ENCODE measurements at regions of chr12 and their contacts with region 1.

Region 1: GRCh38 chr12:22334410-22335290 is at the start of gene ST8SIA1:
- DNase-seq: peak; percentile 62
- H3K4me3 Mint-ChIP-seq: peak within 1 kb of the TSS; percentile 91
- H3K27ac Mint-ChIP-seq: peak within 1 kb of the TSS; percentile 81
- H3K4me1 Mint-ChIP-seq: peaks cover 32% of the 10 kb centered on the region
- H3K27me3 Mint-ChIP-seq: peaks cover 24% of the 10 kb centered on the region
- total RNA-seq, gene ST8SIA1: 2.6 to 3.1 TPM

Region 2: GRCh38 chr12:22100958-22101748 is 233.5 kb before region 1 on chr12:
- CTCF ChIA-PET with region 1: interaction called, 13 read pairs
- POLR2A ChIA-PET with region 1: interaction called, 17 read pairs
- DNase-seq: peak; percentile 44
- H3K4me3 Mint-ChIP-seq: no peak overlapping the region
- H3K27ac Mint-ChIP-seq: no peak overlapping the region
- H3K4me1 Mint-ChIP-seq: peaks cover 12% of the 10 kb centered on the region
- H3K27me3 Mint-ChIP-seq: peaks cover 4% of the 10 kb centered on the region

Region 3: GRCh38 chr12:22215467-22216253 is 119.0 kb before region 1 on chr12:
- CTCF ChIA-PET with region 1: no interaction called
- POLR2A ChIA-PET with region 1: no interaction called
- DNase-seq: no peak
- H3K4me3 Mint-ChIP-seq: no peak overlapping the region
- H3K27ac Mint-ChIP-seq: no peak overlapping the region
- H3K4me1 Mint-ChIP-seq: no peaks in the 10 kb centered on the region
- H3K27me3 Mint-ChIP-seq: no peaks in the 10 kb centered on the region

Region 4: GRCh38 chr12:22282261-22282660 is 52.4 kb before region 1 on chr12:
- CTCF ChIA-PET with region 1: no interaction called
- POLR2A ChIA-PET with region 1: no interaction called
- DNase-seq: no peak
- H3K4me3 Mint-ChIP-seq: no peak overlapping the region
- H3K27ac Mint-ChIP-seq: no peak overlapping the region
- H3K4me1 Mint-ChIP-seq: peaks cover 7% of the 10 kb centered on the region
- H3K27me3 Mint-ChIP-seq: no peaks in the 10 kb centered on the region

Region 5: DNA sequence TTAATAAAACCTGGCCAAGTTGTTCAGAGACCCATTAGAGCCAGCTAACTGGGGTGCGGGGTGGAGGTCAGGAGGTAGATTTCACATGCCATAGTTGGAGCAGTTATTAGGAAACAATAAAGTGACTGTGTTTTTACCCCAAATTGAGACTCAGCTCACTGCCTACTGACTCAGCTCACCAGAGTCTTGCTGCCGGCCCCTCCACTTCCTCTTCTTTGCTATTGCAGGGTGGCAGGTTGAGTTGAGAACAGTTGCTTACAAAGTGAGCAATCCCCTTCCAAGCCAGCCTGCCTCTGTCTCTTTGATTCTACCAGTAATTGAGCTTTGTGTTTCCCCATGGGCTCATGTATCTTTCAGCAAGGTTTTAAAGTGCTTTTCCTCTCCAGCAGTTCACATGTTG is 13.0 kb before region 1 on chr12:
- CTCF ChIA-PET with region 1: interaction called, 14 read pairs
- POLR2A ChIA-PET with region 1: interaction called, 9 read pairs
- DNase-seq: no peak
- H3K4me3 Mint-ChIP-seq: no peak overlapping the region
- H3K27ac Mint-ChIP-seq: peak overlapping the region; percentile 41
- H3K4me1 Mint-ChIP-seq: peaks cover 19% of the 10 kb centered on the region
- H3K27me3 Mint-ChIP-seq: no peaks in the 10 kb centered on the region

Region 6: DNA sequence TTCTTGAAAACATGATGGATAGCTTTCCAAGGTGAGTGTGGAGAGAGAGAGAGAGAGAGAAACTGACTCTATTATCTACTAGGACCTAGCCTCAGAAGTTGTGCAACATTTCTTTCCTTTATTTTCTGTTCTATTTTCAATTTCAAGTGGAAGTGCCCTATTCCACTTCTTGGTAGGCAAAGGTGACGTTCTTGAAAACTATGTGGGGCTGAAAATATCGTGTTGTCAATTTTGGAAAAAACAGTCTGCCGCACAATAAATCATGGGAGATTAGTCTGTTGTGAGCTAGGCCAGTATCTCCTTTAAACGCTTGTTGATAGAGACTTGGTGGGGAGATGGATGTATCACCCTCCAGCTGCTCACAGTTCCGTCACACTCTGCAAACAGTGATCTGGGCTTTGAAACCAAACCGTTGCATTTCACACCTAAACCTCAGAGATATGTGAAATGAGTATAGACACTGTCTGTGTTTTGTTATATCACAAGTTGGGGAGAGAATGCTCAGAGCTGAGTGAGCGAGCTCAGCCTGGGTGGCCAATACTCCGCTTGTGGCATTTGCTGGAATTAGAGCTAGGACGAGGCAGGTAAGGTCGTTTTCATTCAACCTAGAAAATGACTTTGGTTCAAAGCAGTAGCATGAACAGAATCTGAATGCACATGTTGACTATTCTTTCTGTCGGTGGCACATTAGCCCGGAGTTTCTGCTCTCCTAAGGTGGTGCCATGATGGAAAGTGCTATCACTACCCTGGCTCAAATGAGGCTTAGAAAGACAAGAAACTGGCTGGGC is 74.9 kb after region 1 on chr12:
- CTCF ChIA-PET with region 1: interaction called, 14 read pairs
- POLR2A ChIA-PET with region 1: interaction called, 15 read pairs
- DNase-seq: peak; percentile 69
- H3K4me3 Mint-ChIP-seq: peak overlapping the region; percentile 58
- H3K27ac Mint-ChIP-seq: peak overlapping the region; percentile 91
- H3K4me1 Mint-ChIP-seq: peaks cover 41% of the 10 kb centered on the region
- H3K27me3 Mint-ChIP-seq: no peaks in the 10 kb centered on the region

Measured in activated CD4-positive, alpha-beta memory T cell treated with anti-CD3 and anti-CD28 coated beads, Interleukin-2, amount 10 ng/mL, durations not matched to agents 7 days and 5 days (primary cell).